ENCODE measurements at regions of chr21 and their contacts with region 1.

Region 1: DNA sequence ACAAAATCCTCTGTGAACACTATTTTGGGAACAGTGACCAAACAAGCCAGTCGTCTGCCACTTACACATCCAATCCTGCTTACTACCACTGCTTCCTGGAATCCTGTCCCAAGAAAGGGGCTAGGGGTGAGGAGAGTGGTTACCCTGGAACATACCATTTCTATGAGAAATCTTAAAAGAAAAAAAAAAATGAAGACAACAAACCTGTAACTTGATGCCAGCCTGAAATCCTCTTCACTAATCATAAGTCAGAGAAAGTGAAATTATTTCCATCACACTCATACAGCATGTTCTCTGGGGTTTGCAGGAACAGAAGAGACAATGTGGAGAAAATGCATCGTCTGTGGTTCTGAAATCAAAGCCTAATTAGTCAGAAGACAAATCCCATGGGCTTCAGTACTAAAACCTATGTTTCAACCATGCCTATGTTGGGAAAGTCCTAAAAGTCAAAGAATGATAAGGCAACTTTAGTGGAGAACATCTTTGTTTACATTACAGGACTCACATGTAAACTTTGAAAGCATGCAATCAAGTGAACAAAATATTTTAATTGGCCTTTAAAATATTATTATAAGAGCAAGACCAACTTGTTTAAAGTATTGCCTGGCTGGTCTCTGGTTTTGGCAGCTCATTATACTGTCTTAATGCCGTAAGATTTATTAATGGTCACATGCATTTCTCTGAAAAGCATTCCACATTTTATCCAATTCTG is 220.7 kb downstream of the LTN1 start:
- DNase-seq: no peak
- H3K4me3 Mint-ChIP-seq: no peak overlapping the region
- H3K27ac Mint-ChIP-seq: peak overlapping the region; percentile 18
- H3K4me1 Mint-ChIP-seq: peaks cover 68% of the 10 kb centered on the region
- H3K27me3 Mint-ChIP-seq: no peaks in the 10 kb centered on the region

Region 2: GRCh38 chr21:28636988-28637691 is 134.8 kb before region 1 on chr21:
- intact Hi-C with region 1: loop called (anchors 2 kb)
- DNase-seq: no peak
- H3K4me3 Mint-ChIP-seq: no peak overlapping the region
- H3K27ac Mint-ChIP-seq: peak overlapping the region; percentile 45
- H3K4me1 Mint-ChIP-seq: peaks cover 14% of the 10 kb centered on the region
- H3K27me3 Mint-ChIP-seq: no peaks in the 10 kb centered on the region

Region 3: GRCh38 chr21:28704746-28705145 is 67.2 kb before region 1 on chr21:
- intact Hi-C with region 1: no loop called
- DNase-seq: no peak
- H3K4me3 Mint-ChIP-seq: no peak overlapping the region
- H3K27ac Mint-ChIP-seq: no peak overlapping the region
- H3K4me1 Mint-ChIP-seq: no peaks in the 10 kb centered on the region
- H3K27me3 Mint-ChIP-seq: no peaks in the 10 kb centered on the region

Region 4: DNA sequence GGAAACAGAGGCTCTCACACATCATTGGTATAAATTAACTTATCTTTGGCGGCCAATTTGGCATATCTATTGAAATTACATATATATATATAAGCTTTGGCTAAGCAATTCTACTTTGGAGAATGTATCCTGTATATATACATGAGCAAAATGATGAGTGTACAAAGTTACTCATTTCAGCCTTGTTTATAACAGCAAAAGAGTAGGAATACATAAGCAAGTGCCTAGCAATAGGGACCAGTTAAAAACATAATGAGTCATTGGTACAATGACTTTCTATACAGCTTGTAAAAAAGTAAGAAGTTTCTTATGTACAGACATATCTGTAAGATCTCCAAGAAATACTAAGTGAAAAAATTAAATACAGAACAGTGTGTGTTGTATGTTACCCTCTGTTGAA is 30.0 kb after region 1 on chr21:
- intact Hi-C with region 1: loop called (anchors 2 kb)
- DNase-seq: no peak
- H3K4me3 Mint-ChIP-seq: no peak overlapping the region
- H3K27ac Mint-ChIP-seq: no peak overlapping the region
- H3K4me1 Mint-ChIP-seq: peaks cover 5% of the 10 kb centered on the region
- H3K27me3 Mint-ChIP-seq: no peaks in the 10 kb centered on the region

Region 5: GRCh38 chr21:28832013-28832714 is 60.2 kb after region 1 on chr21:
- intact Hi-C with region 1: loop called (anchors 2 kb)
- DNase-seq: peak; percentile 33
- H3K4me3 Mint-ChIP-seq: peak overlapping the region; percentile 70
- H3K27ac Mint-ChIP-seq: peak overlapping the region; percentile 88
- H3K4me1 Mint-ChIP-seq: peaks cover 74% of the 10 kb centered on the region
- H3K27me3 Mint-ChIP-seq: peaks cover 2% of the 10 kb centered on the region

Region 6: DNA sequence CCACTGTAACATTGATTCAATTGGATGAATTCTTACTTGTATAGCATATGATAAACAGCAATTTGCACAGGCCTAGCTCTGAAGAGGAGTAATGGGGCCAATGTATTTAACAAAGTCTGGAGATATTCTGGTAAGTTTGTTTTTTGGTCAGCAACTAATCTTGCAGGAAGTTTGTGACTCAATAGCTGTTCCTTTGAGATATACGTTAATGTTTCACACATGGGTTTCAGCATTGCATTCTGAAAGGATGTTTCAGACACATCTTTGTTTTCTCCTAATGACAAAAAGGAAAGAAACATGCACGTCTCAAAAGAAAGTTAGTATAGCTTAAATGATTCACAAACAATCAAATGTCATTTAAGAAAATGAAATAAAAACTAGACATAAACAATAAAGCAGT is 171.7 kb after region 1 on chr21:
- intact Hi-C with region 1: loop called (anchors 10 kb)
- DNase-seq: no peak
- H3K4me3 Mint-ChIP-seq: no peak overlapping the region
- H3K27ac Mint-ChIP-seq: no peak overlapping the region
- H3K4me1 Mint-ChIP-seq: peaks cover 4% of the 10 kb centered on the region
- H3K27me3 Mint-ChIP-seq: no peaks in the 10 kb centered on the region

Region 7: GRCh38 chr21:30718239-30718909 is 1946.4 kb after region 1 on chr21 and contains the start of gene KRTAP21-3:
- intact Hi-C with region 1: loop called (anchors 10 kb)
- DNase-seq: no peak
- H3K4me3 Mint-ChIP-seq: peak within 1 kb of the TSS; percentile 7
- H3K27ac Mint-ChIP-seq: peak within 1 kb of the TSS; percentile 75
- H3K4me1 Mint-ChIP-seq: peaks cover 29% of the 10 kb centered on the region
- H3K27me3 Mint-ChIP-seq: peaks cover 2% of the 10 kb centered on the region
- total RNA-seq, gene KRTAP21-3: not detected in 2 replicates

Measured in activated T-helper 1 cell treated with anti-CD3 and anti-CD28 coated beads, Interleukin-12 subunit alpha, Interleukin-12 subunit beta, Interleukin-2, Interleukin-4 antibody, amounts not matched to agents 30 ng/mL and 10 ng/mL and 1 ng/mL, durations not matched to agents 14 hours and 24 hours and 36 hours (primary cell).